Vagina (tissue), 2 donors: ENCODE measurements at regions of chr1 and their contacts with region 1.

Region 1: GRCh38 chr1:171984850-171985485 is 143.7 kb downstream of the DNM3 start:
- DNase-seq: no peak
- H3K4me3 ChIP-seq: no peak overlapping the region
- H3K27ac ChIP-seq: no peak overlapping the region
- H3K4me1 ChIP-seq: no peaks in the 10 kb centered on the region
- H3K27me3 ChIP-seq: no peaks in the 10 kb centered on the region
- CTCF ChIP-seq: peak; percentile 47 to 66 (median 65)
- POLR2A ChIP-seq: no peak

Region 2: GRCh38 chr1:171769171-171769570 is 215.8 kb before region 1 on chr1:
- intact Hi-C with region 1: no loop called
- DNase-seq: no peak
- H3K4me3 ChIP-seq: no peak overlapping the region
- H3K27ac ChIP-seq: no peak overlapping the region
- H3K4me1 ChIP-seq: no peaks in the 10 kb centered on the region
- H3K27me3 ChIP-seq: no peaks in the 10 kb centered on the region
- CTCF ChIP-seq: no peak
- POLR2A ChIP-seq: no peak

Region 3: GRCh38 chr1:171801487-171801891 is 183.5 kb before region 1 on chr1:
- intact Hi-C with region 1: loop called (anchors 5 kb)
- DNase-seq: no peak
- H3K4me3 ChIP-seq: no peak overlapping the region
- H3K27ac ChIP-seq: no peak overlapping the region
- H3K4me1 ChIP-seq: peaks cover 10% of the 10 kb centered on the region
- H3K27me3 ChIP-seq: no peaks in the 10 kb centered on the region
- CTCF ChIP-seq: peak; percentile 49 to 70 (median 70)
- POLR2A ChIP-seq: no peak